ENCODE measurements at regions of chr2 and their contacts with region 1.

Region 1: GRCh38 chr2:121095257-121096080 is 189.5 kb downstream of the TFCP2L1 start:
- DNase-seq: peak; percentile 71
- ATAC-seq: peak; percentile 31 to 67

Region 2: DNA sequence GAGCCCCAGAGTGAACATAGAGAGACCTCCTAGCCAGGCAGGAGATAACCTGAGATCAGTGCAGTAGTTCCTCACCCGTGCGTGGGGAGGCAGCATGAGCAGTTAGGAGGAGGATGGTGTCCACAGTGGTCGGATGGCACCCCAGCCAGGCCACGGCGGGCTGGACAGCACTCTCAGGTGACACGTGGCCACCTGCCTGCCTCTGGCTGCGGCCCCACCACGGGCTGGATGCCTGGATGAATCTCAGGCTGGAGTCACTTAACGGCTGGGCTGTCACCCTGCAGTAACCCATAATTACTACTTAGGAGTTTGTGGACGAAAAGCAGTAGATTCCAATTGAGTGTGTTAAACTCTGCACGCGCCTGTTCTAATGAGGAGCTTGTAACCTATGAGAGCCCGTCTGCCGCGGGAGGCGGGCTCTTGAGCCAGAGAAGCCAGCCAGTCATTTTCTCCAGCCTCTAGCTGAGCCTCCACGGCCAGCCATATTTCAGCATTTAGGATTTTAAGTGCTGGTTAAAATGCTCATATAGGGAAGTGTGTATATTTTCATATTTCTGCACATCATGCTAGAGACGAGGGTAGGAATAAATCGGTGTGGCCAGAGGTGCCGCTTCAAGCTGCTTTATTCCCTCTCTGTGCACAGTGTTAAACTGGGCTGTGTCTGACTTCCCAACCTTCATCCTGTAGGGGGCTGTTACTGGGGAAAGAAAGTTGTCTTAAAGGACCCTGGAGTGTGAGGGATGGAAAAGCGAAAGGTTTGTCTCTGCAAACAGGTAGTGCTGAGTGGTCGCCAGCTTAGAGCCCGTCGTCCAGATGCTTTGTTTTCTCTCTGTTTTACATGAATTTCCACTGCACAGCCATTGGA is 215.8 kb before region 1 on chr2:
- intact Hi-C with region 1: no loop called
- DNase-seq: no peak
- ATAC-seq: no peak

Region 3: DNA sequence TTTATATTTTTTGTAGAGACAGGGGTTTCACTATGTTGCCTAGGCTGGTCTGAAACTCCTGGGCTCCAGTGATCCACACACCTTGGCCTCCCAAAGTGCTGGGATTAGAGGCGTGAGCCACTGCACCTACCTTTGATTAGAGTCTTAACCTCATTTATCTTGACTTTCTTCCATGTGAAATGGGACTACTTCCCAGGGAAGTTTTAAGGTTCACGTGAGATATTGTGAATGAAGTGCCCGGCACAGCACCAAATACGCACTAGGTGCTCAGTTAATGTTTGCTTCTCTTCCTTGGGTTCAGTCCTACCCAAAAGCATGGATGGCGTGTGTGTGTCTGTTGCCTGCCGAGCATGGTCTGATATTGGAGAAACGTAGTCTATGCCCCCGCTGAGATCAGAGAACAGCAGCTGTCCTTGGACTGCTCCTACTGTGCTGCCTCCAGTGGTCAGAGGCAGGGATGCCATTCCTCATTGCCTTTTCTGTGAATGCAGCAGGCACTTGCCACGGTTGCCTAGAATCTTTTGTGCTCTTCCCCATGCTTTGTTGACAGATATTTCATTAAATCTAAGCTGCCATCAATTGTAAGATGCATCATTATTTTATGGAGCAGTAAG is 201.9 kb after region 1 on chr2:
- intact Hi-C with region 1: loop called in 1 of 2 experiments (anchors 10 kb)
- DNase-seq: no peak
- ATAC-seq: peak in 1 of 2 donors; percentile 60

Region 4: DNA sequence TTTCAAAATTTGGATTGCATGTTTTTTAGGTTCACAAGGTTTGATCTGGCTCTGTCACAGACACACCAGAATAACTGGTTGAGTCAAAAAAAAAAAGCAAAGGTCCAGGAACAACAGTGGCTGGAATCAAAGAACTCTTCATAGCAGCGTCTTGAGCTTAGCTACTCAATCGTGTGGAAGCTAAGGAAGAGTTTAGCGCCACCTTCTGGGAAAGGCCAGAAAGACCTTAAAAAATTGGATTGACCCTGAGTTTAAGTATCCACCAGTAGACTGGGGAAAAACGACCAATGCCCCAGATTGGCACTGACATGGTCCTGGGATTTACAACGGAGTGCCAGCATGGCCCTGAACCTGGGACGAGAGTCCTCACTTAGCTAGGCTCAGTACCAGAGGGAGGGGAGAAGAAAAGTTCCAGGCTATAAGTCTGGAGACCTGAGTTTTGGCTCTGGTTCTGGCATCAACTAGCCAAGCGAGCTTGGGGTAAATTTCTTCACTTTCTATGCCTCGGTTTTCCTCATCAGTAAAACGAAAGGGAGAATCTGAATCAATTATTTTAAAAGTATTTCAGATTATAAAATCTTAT is 260.7 kb after region 1 on chr2:
- intact Hi-C with region 1: loop called (anchors 2 to 10 kb)
- DNase-seq: no peak
- ATAC-seq: peak; percentile 22 to 65